CD4-positive, alpha-beta memory T cell (primary cell): ENCODE measurements at regions of chr21 and their contacts with region 1.

Region 1: GRCh38 chr21:25561668-25562641 is 45.3 kb downstream of the MRPL39 start:
- DNase-seq: peak; percentile 53 to 76 (median 55)
- H3K4me3 ChIP-seq: peak overlapping the region; percentile 38 to 63
- H3K4me3 Mint-ChIP-seq: peak overlapping the region; percentile 91 to 99 (median 97)
- H3K27ac ChIP-seq: peak overlapping the region; percentile 77
- H3K27ac Mint-ChIP-seq: peak overlapping the region; percentile 92 to 98 (median 97)
- H3K4me1 ChIP-seq: peaks cover 63% of the 10 kb centered on the region
- H3K4me1 Mint-ChIP-seq: peaks cover 45 to 71% (median 60%) of the 10 kb centered on the region in 4 donors
- H3K27me3 ChIP-seq: no peaks in the 10 kb centered on the region
- H3K27me3 Mint-ChIP-seq: no peaks in the 10 kb centered on the region

Region 2: DNA sequence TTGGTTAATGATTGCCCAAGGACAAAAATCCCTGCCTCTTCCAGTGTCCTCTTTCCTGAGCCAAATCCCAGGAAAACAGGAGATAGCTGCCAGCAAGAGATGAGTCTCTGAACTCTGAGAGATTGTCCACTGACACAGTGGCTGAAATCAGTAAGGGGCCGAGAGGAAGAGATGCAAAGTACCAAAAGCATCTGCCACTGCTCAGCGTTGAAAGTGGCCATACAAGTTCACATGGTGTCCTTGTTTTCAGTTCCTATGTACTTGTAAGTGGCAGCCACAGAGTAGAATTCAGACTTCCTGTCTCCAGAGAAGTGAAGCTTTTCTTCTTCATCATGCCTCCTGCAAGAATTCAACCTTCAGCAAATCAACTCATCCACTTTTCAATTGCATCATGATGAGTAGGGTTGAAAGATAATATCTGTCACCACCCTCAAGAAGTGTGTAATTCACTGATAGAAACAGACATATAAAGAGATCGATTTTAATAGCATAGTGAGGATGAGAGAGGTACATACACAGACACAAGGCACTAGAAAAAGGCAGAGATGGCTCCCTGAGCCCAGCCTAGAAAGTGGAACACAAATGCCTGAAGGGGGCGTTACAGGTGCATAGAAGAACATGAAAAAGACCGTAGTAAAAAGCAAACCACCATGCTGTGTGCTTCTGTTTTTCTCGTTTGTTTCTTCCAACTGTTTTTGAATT is 140.5 kb before region 1 on chr21:
- CTCF ChIA-PET with region 1: interaction called, 5 read pairs
- POLR2A ChIA-PET with region 1: no interaction called
- intact Hi-C with region 1: loop called (anchors 1 kb)
- DNase-seq: peak; percentile 63 to 69 (median 63)
- H3K4me3 ChIP-seq: no peak overlapping the region
- H3K4me3 Mint-ChIP-seq: peak overlapping the region in 6 of 8 donors; percentile 1 to 81 (median 36)
- H3K27ac ChIP-seq: peak overlapping the region; percentile 7
- H3K27ac Mint-ChIP-seq: peak overlapping the region; percentile 29 to 89 (median 54)
- H3K4me1 ChIP-seq: peaks cover 11% of the 10 kb centered on the region
- H3K4me1 Mint-ChIP-seq: peaks cover 6 to 11% (median 9%) of the 10 kb centered on the region in 4 donors
- H3K27me3 ChIP-seq: no peaks in the 10 kb centered on the region
- H3K27me3 Mint-ChIP-seq: no peaks in the 10 kb centered on the region

Region 3: DNA sequence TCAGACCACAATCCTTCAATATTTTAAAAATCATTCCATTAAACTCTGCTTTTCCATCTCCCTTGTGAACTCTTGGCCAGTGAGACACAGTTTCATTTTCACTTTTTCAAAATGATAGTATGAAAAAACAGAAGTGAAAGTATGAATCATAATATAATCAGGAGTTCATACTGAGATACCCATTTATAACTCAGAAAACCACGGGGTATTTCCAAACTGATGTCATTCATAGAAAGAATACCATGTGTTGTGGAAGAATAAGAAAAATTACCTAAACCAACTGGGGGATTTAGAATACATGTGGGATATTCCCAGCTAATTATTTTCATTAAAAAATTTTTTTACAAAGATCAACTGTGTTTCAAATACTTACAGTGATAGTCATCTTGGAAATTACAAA is 104.5 kb before region 1 on chr21:
- CTCF ChIA-PET with region 1: no interaction called
- POLR2A ChIA-PET with region 1: no interaction called
- intact Hi-C with region 1: loop called (anchors 2 kb)
- DNase-seq: peak in 4 of 5 donors; percentile 46 to 69 (median 61)
- H3K4me3 ChIP-seq: no peak overlapping the region
- H3K4me3 Mint-ChIP-seq: peak overlapping the region; percentile 72 to 93 (median 85)
- H3K27ac ChIP-seq: peak overlapping the region; percentile 57
- H3K27ac Mint-ChIP-seq: peak overlapping the region; percentile 54 to 98 (median 94)
- H3K4me1 ChIP-seq: peaks cover 10% of the 10 kb centered on the region
- H3K4me1 Mint-ChIP-seq: peaks cover 17 to 23% (median 20%) of the 10 kb centered on the region in 4 donors
- H3K27me3 ChIP-seq: no peaks in the 10 kb centered on the region
- H3K27me3 Mint-ChIP-seq: no peaks in the 10 kb centered on the region

Region 4: GRCh38 chr21:25573409-25574206 is 11.7 kb after region 1 on chr21:
- CTCF ChIA-PET with region 1: interaction called, 6 read pairs
- POLR2A ChIA-PET with region 1: interaction called, 38 read pairs
- intact Hi-C with region 1: loop called (anchors 1 kb)
- DNase-seq: peak; percentile 60 to 84 (median 67)
- H3K4me3 ChIP-seq: peak overlapping the region in 1 of 2 donors; percentile 38
- H3K4me3 Mint-ChIP-seq: peak overlapping the region; percentile 75 to 89 (median 86)
- H3K27ac ChIP-seq: peak overlapping the region; percentile 74
- H3K27ac Mint-ChIP-seq: peak overlapping the region; percentile 87 to 97 (median 92)
- H3K4me1 ChIP-seq: peaks cover 75% of the 10 kb centered on the region
- H3K4me1 Mint-ChIP-seq: peaks cover 47 to 76% (median 64%) of the 10 kb centered on the region in 4 donors
- H3K27me3 ChIP-seq: no peaks in the 10 kb centered on the region
- H3K27me3 Mint-ChIP-seq: no peaks in the 10 kb centered on the region

Region 5: DNA sequence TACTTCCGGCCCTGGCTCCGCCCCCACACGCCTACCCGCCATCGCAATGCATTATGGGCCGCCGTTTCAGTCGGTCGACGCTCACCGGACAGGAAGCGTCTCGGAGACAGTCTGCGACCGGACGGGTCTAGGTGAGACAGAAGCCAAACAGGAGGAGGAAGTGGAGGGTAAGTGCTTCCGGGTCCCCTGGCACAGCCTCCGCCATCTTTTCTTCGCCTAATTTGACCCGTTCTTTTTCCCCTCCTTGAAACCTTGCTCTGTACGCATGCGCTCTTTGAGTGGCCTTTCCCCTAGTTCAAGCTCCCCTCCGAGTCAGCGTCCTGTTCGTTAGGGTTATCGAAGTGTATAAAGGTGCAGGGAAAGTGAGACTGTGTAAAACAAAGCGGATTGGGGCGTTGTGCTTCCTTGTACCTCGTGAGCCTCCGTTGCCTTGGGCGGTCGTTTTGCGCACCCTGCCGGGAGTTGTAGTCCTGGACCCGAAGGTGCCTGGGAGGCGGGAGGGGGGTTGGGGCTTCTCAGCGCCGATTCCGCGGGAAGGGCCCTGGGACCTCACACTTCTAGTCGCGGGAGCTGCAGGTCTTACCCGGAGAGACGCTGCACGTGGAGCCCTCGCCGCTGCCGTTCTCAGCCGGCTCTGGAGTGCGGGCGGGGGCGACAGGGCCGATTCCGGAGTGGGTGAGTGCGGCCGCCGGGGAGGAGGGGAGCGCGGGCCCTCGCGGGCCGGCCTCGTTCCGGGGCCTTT is 173.1 kb after region 1 on chr21 and contains the starts of genes ATP5PF and GABPA:
- CTCF ChIA-PET with region 1: no interaction called
- POLR2A ChIA-PET with region 1: interaction called, 13 read pairs
- intact Hi-C with region 1: loop called (anchors 2 kb)
- DNase-seq: peak; percentile 96 to 98 (median 98)
- H3K4me3 ChIP-seq: peak within 1 kb of the TSS; percentile 77 to 93
- H3K4me3 Mint-ChIP-seq: peak within 1 kb of the TSS; percentile 99 to 100 (median 100)
- H3K27ac ChIP-seq: peak within 1 kb of the TSS; percentile 91
- H3K27ac Mint-ChIP-seq: peak within 1 kb of the TSS; percentile 99 to 100 (median 100)
- H3K4me1 ChIP-seq: peaks cover 52% of the 10 kb centered on the region
- H3K4me1 Mint-ChIP-seq: peaks cover 38 to 71% (median 53%) of the 10 kb centered on the region in 4 donors
- H3K27me3 ChIP-seq: no peaks in the 10 kb centered on the region
- H3K27me3 Mint-ChIP-seq: peaks cover 3 to 4% of the 10 kb centered on the region in 2 donors
- total RNA-seq, gene ATP5PF: 56.6 to 64.1 TPM
- total RNA-seq, gene GABPA: 28.4 to 29.4 TPM